ENCODE measurements at regions of chr2 and their contacts with region 1.

Region 1: DNA sequence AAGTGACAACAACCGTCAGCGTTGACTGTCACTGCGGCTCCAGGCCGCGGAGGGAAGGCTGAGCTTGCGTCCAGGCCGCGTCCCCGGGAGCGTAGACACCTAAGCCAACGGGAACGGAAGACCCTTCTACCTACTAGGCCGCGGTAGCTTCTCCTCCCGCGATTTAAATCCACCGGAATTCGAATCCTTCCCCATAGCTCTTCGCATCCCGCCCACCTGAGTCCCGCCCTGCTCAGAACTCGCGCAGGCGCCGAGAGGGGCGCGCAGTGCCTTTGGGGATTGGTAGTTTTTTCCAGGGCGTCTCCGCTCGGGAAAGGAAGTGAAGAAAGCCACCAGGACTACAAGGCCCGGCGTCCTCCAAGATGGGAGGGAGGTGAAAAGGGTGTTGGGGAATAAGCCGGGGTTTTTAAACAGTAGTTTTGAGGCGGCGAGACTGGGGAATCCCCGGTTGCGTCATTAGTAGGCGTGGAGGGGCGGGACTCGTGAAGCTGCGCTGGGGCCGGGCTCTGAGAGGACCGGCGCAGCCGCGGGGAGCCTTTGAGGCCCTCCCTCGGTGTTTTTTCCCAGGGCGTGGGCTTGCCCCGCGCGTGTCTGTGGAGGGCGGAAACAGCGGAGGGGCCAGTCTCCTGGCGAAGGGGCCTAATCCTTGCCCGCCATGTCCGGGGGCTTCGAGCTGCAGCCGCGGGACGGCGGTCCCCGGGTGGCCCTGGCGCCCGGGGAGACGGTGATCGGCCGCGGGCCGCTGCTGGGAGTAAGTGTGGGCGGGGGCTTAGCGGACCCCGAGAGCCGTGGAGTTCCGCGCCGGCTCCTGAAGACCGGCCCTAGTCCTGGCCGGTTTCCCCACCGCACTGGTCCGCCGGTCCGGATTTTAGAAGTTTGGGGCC is at the starts of genes APLF and FBXO48:
- DNase-seq: peak; percentile 98 to 100 (median 99)
- H3K4me3 ChIP-seq: peak within 1 kb of the TSS; percentile 85 to 98
- H3K4me3 Mint-ChIP-seq: peak within 1 kb of the TSS; percentile 90 to 97 (median 96)
- H3K27ac ChIP-seq: peak within 1 kb of the TSS; percentile 96
- H3K27ac Mint-ChIP-seq: peak within 1 kb of the TSS; percentile 89 to 98 (median 97)
- H3K4me1 ChIP-seq: peaks cover 45% of the 10 kb centered on the region
- H3K4me1 Mint-ChIP-seq: peaks cover 25 to 55% (median 38%) of the 10 kb centered on the region in 4 donors
- H3K27me3 ChIP-seq: no peaks in the 10 kb centered on the region
- H3K27me3 Mint-ChIP-seq: no peaks in the 10 kb centered on the region
- total RNA-seq, gene APLF: 8.2 to 9.5 TPM
- total RNA-seq, gene FBXO48: 6.4 to 6.5 TPM

Region 2: DNA sequence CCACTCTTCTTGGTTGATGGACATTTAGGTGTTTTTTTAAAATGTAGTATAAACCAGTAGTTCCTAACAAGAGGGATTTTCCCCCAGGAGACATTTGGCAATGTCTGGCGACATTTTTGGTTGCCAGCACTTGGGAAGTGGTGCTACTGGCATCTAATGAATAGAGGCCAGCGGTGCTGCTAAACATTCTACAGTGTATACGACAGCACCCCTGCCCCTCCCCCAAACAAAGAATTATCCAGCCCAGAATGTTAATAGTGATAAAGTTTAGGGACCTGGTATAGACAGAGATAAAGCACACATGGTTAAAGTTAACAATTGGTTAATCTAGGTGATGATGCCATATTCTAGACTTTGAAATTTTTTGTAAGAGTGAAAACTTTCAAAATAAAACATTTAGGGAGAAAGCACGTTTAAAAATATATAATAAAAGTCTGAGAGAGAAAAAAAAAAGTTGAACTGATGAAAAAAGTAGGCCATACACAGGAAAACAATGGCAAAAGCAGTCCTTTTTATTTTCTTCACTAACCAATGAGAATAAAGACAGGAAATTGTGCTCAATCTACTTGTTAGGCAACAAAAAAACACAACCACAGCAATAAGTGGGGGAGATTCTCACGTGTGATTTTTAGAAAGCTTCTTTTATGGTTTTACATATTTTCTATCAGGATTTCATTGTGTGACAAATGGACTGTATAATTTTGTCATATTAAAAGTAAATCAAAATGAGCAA is 15.0 kb before region 1 on chr2:
- CTCF ChIA-PET with region 1: interaction called, 36 read pairs
- POLR2A ChIA-PET with region 1: interaction called, 20 read pairs
- intact Hi-C with region 1: no loop called
- DNase-seq: peak in 4 of 5 donors; percentile 59 to 70 (median 68)
- H3K4me3 ChIP-seq: no peak overlapping the region
- H3K4me3 Mint-ChIP-seq: peak overlapping the region in 7 of 8 donors; percentile 13 to 67 (median 52)
- H3K27ac ChIP-seq: no peak overlapping the region
- H3K27ac Mint-ChIP-seq: peak overlapping the region; percentile 57 to 86 (median 82)
- H3K4me1 ChIP-seq: peaks cover 20% of the 10 kb centered on the region
- H3K4me1 Mint-ChIP-seq: peaks cover 17 to 23% (median 20%) of the 10 kb centered on the region in 4 donors
- H3K27me3 ChIP-seq: no peaks in the 10 kb centered on the region
- H3K27me3 Mint-ChIP-seq: no peaks in the 10 kb centered on the region

Region 3: DNA sequence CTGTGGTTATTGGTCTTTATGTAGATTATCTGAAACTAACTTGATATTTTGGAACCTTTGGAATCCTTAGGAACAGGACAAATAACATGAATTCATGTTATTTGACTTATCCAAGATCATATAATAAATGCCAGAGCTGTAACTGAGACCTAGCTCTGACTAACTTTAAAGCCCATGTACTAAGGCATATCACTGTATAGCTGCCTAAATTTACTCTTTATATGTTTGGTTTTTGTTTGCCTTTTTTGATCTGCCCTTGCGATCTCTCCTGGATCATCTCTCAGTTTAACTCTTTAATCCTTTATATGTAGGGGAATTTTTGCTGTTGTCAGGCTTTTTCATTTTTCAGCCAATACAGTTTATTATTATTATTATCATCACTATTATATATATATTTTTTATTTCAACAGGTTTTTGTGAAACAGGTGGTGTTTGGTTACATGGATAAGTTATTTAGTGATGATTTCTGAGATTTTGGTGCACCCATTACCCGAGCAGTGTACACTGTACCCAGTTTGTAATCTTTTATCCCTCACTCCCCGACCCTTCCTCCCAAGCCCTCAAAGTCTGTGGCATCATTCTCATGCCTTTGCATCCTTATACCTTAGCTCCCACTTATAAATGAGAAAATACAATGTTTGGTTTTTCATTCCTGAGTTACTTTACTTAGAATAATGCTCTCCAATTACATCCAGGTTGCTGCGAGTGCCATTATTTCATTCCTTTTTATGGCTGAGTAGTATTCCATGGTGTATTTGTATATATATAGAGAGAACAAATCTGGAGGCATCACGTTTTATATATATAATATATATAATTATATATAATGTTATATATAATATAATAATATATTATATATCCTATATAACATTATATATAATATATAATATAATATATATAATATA is 49.0 kb after region 1 on chr2:
- CTCF ChIA-PET with region 1: interaction called, 5 read pairs
- POLR2A ChIA-PET with region 1: interaction called, 6 read pairs
- intact Hi-C with region 1: loop called (anchors 5 kb)
- DNase-seq: no peak
- H3K4me3 ChIP-seq: no peak overlapping the region
- H3K4me3 Mint-ChIP-seq: no peak overlapping the region
- H3K27ac ChIP-seq: no peak overlapping the region
- H3K27ac Mint-ChIP-seq: peak overlapping the region in 1 of 7 donors; percentile 70
- H3K4me1 ChIP-seq: no peaks in the 10 kb centered on the region
- H3K4me1 Mint-ChIP-seq: peaks cover 0 to 1% (median under 1%) of the 10 kb centered on the region in 4 donors
- H3K27me3 ChIP-seq: no peaks in the 10 kb centered on the region
- H3K27me3 Mint-ChIP-seq: no peaks in the 10 kb centered on the region

Region 4: GRCh38 chr2:68721482-68722101 is 254.3 kb after region 1 on chr2:
- CTCF ChIA-PET with region 1: interaction called, 11 read pairs
- POLR2A ChIA-PET with region 1: interaction called, 21 read pairs
- intact Hi-C with region 1: loop called (anchors 2 kb)
- DNase-seq: peak; percentile 64 to 78 (median 70)
- H3K4me3 ChIP-seq: peak overlapping the region in 1 of 2 donors; percentile 6
- H3K4me3 Mint-ChIP-seq: peak overlapping the region; percentile 63 to 89 (median 83)
- H3K27ac ChIP-seq: peak overlapping the region; percentile 54
- H3K27ac Mint-ChIP-seq: peak overlapping the region; percentile 91 to 98 (median 96)
- H3K4me1 ChIP-seq: peaks cover 96% of the 10 kb centered on the region
- H3K4me1 Mint-ChIP-seq: peaks cover 75 to 99% (median 90%) of the 10 kb centered on the region in 4 donors
- H3K27me3 ChIP-seq: no peaks in the 10 kb centered on the region
- H3K27me3 Mint-ChIP-seq: no peaks in the 10 kb centered on the region

Region 5: DNA sequence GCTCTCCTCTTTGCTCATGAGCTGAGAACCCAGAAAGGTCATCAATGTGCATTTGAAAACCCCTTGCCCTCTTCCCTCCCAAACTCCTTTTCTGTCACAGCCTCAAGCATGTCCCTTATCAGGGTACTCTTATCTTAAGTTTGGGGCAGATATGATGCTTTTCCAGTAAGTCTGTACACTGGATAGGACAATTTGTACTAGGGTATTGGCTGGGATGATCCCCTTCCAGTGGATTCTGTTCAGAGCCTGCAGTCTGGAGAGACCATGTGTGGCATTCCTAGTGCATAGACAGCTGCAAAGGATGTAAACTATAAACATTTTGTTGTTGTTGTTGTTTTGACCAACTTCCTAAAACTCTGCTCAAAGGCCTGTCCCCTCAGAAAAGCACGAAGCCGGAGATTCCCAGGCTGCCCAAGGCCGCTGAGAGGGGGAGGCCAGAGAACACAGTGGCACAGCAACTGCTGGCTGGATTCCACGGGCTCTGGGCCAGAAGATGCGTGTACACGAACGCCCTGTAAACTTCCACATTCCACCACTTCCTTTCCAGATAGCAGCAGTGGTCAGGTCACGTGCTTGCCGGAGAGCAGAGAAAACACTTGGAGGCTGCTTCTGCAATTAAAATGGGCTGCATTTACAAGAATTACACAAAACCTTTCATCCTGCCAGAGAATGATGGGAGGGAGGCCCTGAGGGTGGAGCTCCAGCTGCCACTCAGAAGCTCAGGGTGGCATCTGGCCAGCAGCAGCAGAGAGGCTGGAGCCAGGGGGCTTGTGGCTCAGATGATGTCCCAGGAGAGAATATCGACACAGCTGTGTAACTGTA is 361.8 kb after region 1 on chr2:
- CTCF ChIA-PET with region 1: interaction called, 5 read pairs
- POLR2A ChIA-PET with region 1: interaction called, 3 read pairs
- intact Hi-C with region 1: loop called (anchors 1 kb)
- DNase-seq: peak; percentile 80 to 90 (median 83)
- H3K4me3 ChIP-seq: peak overlapping the region in 1 of 2 donors; percentile 32
- H3K4me3 Mint-ChIP-seq: peak overlapping the region; percentile 17 to 91 (median 80)
- H3K27ac ChIP-seq: peak overlapping the region; percentile 65
- H3K27ac Mint-ChIP-seq: peak overlapping the region; percentile 90 to 94 (median 92)
- H3K4me1 ChIP-seq: peaks cover 59% of the 10 kb centered on the region
- H3K4me1 Mint-ChIP-seq: peaks cover 50 to 73% (median 62%) of the 10 kb centered on the region in 4 donors
- H3K27me3 ChIP-seq: no peaks in the 10 kb centered on the region
- H3K27me3 Mint-ChIP-seq: no peaks in the 10 kb centered on the region

Region 6: DNA sequence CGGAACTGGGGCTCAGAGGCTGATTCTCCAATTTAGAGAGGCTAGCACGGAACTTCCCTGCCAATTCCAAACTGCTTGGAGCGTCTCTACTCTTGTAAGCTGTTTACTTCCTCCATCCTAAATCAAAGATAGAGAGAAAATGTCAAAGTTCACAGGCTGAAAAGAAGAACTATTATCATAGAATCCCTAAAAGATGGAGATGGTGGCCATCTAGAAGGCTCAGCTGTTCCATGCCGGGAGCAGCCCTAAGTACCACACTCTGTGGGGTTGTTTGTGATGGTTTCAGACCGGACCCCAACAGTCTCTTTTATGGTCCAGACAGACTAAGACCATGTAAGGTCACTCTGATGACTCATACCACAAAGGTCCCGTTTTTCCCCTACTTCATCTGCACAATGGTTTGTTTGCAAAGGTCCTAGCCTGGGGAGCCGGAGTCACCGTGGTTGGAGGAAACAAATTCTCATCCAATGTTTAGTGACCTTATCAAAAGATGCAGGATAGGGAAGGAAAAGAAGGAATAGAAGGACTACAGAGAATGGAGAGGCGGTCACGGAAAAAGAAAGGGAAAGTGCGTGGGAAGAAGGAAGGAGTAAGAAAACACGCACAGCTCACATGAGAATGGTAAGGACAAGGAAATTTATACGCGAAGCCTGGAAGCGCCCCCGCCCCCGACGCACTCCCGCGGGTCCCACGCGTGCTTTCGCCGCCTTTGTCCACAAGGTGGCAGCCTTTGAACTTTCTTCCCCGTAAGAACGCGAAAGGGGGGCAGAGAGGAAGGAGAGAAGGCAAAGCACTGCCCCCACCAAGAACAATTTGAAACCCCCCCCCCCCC is 545.2 kb after region 1 on chr2:
- CTCF ChIA-PET with region 1: no interaction called
- POLR2A ChIA-PET with region 1: no interaction called
- intact Hi-C with region 1: loop called (anchors 1 kb)
- DNase-seq: peak; percentile 18 to 38 (median 33)
- H3K4me3 ChIP-seq: peak overlapping the region; percentile 36 to 54
- H3K4me3 Mint-ChIP-seq: peak overlapping the region; percentile 72 to 92 (median 81)
- H3K27ac ChIP-seq: no peak overlapping the region
- H3K27ac Mint-ChIP-seq: peak overlapping the region in 1 of 7 donors; percentile 48
- H3K4me1 ChIP-seq: peaks cover 11% of the 10 kb centered on the region
- H3K4me1 Mint-ChIP-seq: peaks cover 11 to 17% (median 16%) of the 10 kb centered on the region in 4 donors
- H3K27me3 ChIP-seq: peaks cover 32% of the 10 kb centered on the region
- H3K27me3 Mint-ChIP-seq: peaks cover 35 to 36% of the 10 kb centered on the region in 2 donors